ENCODE measurements at regions of chr17 and their contacts with region 1.

Region 1: GRCh38 chr17:82418001-82418986 is at the starts of genes HEXD and OGFOD3:
- DNase-seq: peak; percentile 80
- H3K4me3 Mint-ChIP-seq: peak within 1 kb of the TSS; percentile 75
- H3K27ac Mint-ChIP-seq: peak within 1 kb of the TSS; percentile 30
- H3K4me1 Mint-ChIP-seq: peaks cover 31% of the 10 kb centered on the region
- H3K27me3 Mint-ChIP-seq: no peaks in the 10 kb centered on the region
- total RNA-seq, gene HEXD: 22.4 to 26.3 TPM
- total RNA-seq, gene OGFOD3: 31.1 to 32.9 TPM

Region 2: DNA sequence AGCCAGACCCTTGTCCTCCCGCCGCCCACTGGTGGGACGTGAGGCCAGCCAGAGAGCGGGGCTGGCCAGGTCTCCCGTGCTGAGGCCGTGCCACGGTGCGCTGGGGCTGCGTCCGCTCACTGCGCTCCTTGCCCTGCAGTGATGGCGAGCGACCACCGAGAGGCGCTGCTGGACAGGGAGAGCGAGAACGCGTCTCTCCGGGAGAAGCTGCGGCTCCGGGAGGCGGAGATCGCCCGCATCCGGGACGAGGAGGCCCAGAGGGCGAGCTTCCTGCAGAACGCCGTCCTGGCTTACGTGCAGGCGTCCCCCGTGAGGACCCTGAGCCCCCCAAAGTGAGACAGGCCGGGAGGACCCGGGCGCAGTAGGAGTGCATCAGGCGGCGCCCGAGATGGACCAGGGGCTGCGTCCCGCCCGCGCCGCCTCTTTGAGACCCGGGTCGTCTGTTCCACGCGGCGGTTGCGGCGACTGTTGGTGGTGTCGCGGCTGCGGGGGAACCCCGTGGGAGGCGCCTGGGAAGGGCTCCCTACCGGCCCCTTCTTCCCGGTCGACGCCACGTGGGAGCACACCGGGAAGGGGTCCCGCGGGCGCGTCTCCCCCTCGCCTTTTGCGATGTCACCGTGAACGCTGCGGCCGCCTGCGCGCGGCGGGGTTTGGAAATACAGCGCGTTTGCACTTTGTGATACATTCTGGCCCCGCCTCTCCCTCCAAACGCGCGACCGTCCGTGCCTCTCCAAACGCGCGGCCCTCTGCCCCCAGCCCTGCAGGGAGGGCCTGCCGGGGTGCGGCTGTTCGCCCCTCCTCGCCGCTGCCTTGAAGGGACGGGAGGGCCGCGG is 387.6 kb before region 1 on chr17:
- CTCF ChIA-PET with region 1: no interaction called
- intact Hi-C with region 1: loop called (anchors 1 kb)
- DNase-seq: peak; percentile 90
- H3K4me3 Mint-ChIP-seq: peak overlapping the region; percentile 76
- H3K27ac Mint-ChIP-seq: no peak overlapping the region
- H3K4me1 Mint-ChIP-seq: peaks cover 8% of the 10 kb centered on the region
- H3K27me3 Mint-ChIP-seq: no peaks in the 10 kb centered on the region

Region 3: GRCh38 chr17:82297714-82298537 is 120.4 kb before region 1 on chr17:
- CTCF ChIA-PET with region 1: interaction called, 4 read pairs
- intact Hi-C with region 1: loop called (anchors 1 kb)
- DNase-seq: peak; percentile 97
- H3K4me3 Mint-ChIP-seq: peak overlapping the region; percentile 93
- H3K27ac Mint-ChIP-seq: peak overlapping the region; percentile 100
- H3K4me1 Mint-ChIP-seq: peaks cover 76% of the 10 kb centered on the region
- H3K27me3 Mint-ChIP-seq: no peaks in the 10 kb centered on the region

Region 4: DNA sequence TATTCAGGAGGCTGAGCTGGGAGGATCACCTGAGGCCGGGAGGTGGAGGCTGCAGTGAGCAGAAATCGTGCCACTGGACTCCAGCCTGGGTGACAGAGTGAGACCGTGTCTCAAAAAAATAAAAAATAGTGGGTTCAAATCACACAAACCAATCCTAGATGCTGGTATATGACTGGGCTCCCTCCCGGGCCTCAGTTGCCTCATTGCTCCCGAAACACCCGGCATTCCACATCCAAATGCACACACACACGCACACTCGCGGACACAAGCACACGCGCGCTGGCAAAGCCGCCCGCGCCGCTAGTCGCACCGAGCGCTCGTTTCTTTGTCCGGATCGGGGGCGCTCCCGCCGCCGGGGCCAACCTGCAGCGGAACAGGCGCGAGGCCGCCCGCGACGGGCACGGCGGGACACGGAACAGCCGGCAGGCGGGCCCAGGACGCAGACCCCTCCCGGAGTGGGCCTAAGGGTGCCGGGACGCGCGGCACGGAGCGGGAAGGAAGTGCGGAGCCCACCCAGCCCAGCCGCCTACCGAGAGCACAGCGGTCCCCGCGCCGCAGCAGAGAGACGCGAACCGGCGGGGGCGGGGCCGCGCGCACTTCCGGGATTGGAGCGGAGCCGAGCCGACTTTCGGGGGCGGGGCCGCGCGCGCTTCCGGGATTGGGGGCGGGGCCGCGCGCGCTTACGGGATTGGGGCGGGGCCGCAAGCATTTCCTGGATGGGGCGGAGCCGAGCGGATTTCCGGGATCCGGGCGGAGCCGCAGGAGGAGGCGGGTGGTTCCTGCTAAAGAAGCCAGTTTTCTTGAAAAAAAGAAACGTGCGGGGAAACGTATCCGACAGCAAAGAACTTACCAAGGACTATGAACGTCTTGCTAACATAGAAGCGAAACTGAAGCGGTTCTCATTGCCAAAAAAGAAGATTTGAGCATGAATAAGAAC is 32.1 kb after region 1 on chr17 and contains the start of gene CYBC1:
- CTCF ChIA-PET with region 1: no interaction called
- intact Hi-C with region 1: loop called (anchors 1 kb)
- DNase-seq: peak; percentile 97
- H3K4me3 Mint-ChIP-seq: peak within 1 kb of the TSS; percentile 94
- H3K27ac Mint-ChIP-seq: peak within 1 kb of the TSS; percentile 99
- H3K4me1 Mint-ChIP-seq: peaks cover 41% of the 10 kb centered on the region
- H3K27me3 Mint-ChIP-seq: no peaks in the 10 kb centered on the region
- total RNA-seq, gene CYBC1: 292 to 294 TPM

Region 5: DNA sequence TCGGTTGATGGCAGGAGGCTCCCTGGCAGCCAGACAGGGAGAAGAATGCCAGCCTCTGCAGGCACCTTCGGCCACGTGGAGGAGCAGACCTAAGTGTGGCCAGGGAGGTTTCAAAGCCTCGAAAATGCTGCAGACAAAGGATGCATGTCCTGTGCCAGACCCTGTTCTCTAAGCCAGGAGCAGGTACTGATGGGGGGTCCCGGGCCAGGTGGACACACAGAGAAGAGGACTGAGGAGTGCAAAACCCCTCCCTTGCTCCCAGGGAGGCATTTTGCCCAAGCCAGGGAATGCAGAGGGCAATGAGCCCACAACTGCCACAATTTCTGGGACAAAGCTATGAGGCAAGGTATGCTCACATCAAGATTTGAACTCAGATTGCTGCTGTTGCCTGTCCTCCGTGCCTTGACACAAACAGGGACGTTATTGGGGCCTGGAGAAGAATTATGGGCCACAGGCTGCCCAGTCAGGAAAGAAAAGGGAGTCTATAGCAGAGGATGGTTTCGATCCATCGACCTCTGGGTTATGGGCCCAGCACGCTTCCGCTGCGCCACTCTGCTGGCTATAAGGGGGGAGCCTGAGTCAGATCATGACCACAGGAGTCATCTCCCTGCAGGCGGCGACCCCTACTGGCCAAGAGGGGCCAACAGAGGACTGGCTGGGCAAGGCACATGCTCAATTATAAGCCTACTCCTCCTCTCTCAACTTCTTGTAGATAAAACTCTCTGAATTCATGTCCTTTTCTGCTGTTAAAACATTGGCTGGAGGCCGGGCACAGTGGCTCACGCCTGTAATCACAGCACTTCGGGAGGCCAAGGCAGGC is 76.2 kb after region 1 on chr17:
- CTCF ChIA-PET with region 1: no interaction called
- intact Hi-C with region 1: loop called (anchors 1 kb)
- DNase-seq: peak; percentile 94
- H3K4me3 Mint-ChIP-seq: peak overlapping the region; percentile 70
- H3K27ac Mint-ChIP-seq: peak overlapping the region; percentile 81
- H3K4me1 Mint-ChIP-seq: peaks cover 21% of the 10 kb centered on the region
- H3K27me3 Mint-ChIP-seq: no peaks in the 10 kb centered on the region

Region 6: GRCh38 chr17:82507631-82508175 is 89.4 kb after region 1 on chr17:
- CTCF ChIA-PET with region 1: no interaction called
- intact Hi-C with region 1: no loop called
- DNase-seq: no peak
- H3K4me3 Mint-ChIP-seq: no peak overlapping the region
- H3K27ac Mint-ChIP-seq: no peak overlapping the region
- H3K4me1 Mint-ChIP-seq: peaks cover 7% of the 10 kb centered on the region
- H3K27me3 Mint-ChIP-seq: no peaks in the 10 kb centered on the region

Region 7: GRCh38 chr17:82648166-82648668 is 229.9 kb after region 1 on chr17 and contains the start of gene WDR45B:
- CTCF ChIA-PET with region 1: no interaction called
- intact Hi-C with region 1: loop called (anchors 2 kb)
- DNase-seq: peak; percentile 88
- H3K4me3 Mint-ChIP-seq: peak within 1 kb of the TSS; percentile 80
- H3K27ac Mint-ChIP-seq: no peak within 1 kb of the TSS
- H3K4me1 Mint-ChIP-seq: peaks cover 25% of the 10 kb centered on the region
- H3K27me3 Mint-ChIP-seq: no peaks in the 10 kb centered on the region
- total RNA-seq, gene WDR45B: 23.2 to 25.0 TPM

Measured in activated naive CD4-positive, alpha-beta T cell treated with anti-CD3 and anti-CD28 coated beads for 36 hours (primary cell).